ENCODE measurements at regions of chr11 and their contacts with region 1.

Region 1: DNA sequence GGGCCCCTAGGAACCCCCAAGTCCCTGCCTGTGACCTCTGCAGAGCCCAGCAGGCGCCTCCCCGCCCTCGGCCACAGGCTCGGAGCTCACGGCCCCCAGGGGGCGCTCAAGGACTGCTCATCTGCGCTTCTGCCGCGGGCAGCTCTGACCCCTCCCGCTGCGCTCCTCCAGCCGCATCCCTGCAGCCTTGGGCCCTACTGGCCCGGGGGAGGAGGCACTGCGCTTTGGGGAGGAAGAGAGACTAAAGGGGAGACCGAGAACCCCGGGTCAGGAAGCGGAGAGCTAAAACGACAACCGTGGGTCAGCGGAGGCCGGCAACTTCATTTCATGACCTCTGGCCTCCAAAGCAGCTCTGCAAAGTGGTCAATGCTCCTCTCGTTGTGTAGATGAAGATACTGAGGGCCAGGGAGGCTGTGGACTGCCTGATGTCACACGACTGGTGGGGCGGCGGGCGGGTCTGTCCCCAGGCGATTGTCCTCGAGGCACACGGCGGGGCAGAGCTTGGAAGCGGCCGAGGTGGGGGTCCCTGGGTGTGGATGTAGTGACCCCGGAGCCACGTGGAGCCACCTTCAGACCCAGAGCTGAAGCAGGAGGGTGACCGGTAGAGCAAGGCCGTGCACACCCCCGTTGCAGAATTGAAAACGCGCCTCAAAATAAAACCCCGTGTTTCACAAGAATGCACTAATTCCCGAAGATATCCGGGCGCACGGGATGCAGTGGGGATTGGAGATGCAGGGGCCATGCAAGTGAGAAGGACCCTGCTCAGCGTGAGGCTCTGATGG is 2.7 kb upstream of the KRTAP5-6 start:
- DNase-seq: peak; percentile 55 to 93 (median 78)
- ATAC-seq: peak; percentile 75
- H3K4me3 ChIP-seq: no peak overlapping the region
- H3K4me3 Mint-ChIP-seq: no peak overlapping the region
- H3K27ac ChIP-seq: no peak overlapping the region
- H3K27ac Mint-ChIP-seq: no peak overlapping the region
- H3K4me1 ChIP-seq: peaks cover 15% of the 10 kb centered on the region
- H3K4me1 Mint-ChIP-seq: peaks cover 3% of the 10 kb centered on the region
- H3K27me3 ChIP-seq: peaks cover 10 to 28% of the 10 kb centered on the region in 2 experiments
- H3K27me3 Mint-ChIP-seq: peaks cover 8% of the 10 kb centered on the region
- CTCF ChIP-seq: peak; percentile 77

Region 2: GRCh38 chr11:1652771-1653540 is 41.3 kb before region 1 on chr11:
- CTCF ChIA-PET with region 1: interaction called, 19 read pairs
- POLR2A ChIA-PET with region 1: no interaction called
- intact Hi-C with region 1: loop called (anchors 1 to 5 kb)
- DNase-seq: peak; percentile 60 to 86 (median 74)
- ATAC-seq: peak; percentile 98
- H3K4me3 ChIP-seq: no peak overlapping the region
- H3K4me3 Mint-ChIP-seq: no peak overlapping the region
- H3K27ac ChIP-seq: no peak overlapping the region
- H3K27ac Mint-ChIP-seq: no peak overlapping the region
- H3K4me1 ChIP-seq: peaks cover 6% of the 10 kb centered on the region
- H3K4me1 Mint-ChIP-seq: no peaks in the 10 kb centered on the region
- H3K27me3 ChIP-seq: no peaks in the 10 kb centered on the region
- H3K27me3 Mint-ChIP-seq: peaks cover 12% of the 10 kb centered on the region
- CTCF ChIP-seq: peak; percentile 98

Region 3: GRCh38 chr11:1772270-1773130 is 78.2 kb after region 1 on chr11:
- CTCF ChIA-PET with region 1: no interaction called
- POLR2A ChIA-PET with region 1: no interaction called
- intact Hi-C with region 1: loop called in 1 of 2 experiments (anchors 2 kb)
- DNase-seq: peak in 8 of 14 experiments; percentile 23 to 74 (median 47)
- ATAC-seq: peak; percentile 89
- H3K4me3 ChIP-seq: peak overlapping the region; percentile 19
- H3K4me3 Mint-ChIP-seq: no peak overlapping the region
- H3K27ac ChIP-seq: no peak overlapping the region
- H3K27ac Mint-ChIP-seq: no peak overlapping the region
- H3K4me1 ChIP-seq: peaks cover 27% of the 10 kb centered on the region
- H3K4me1 Mint-ChIP-seq: peaks cover 11% of the 10 kb centered on the region
- H3K27me3 ChIP-seq: peaks cover 0 to 2% of the 10 kb centered on the region in 2 experiments
- H3K27me3 Mint-ChIP-seq: no peaks in the 10 kb centered on the region
- CTCF ChIP-seq: no peak

Region 4: GRCh38 chr11:1832211-1832919 is 138.1 kb after region 1 on chr11:
- CTCF ChIA-PET with region 1: interaction called, 116 read pairs
- POLR2A ChIA-PET with region 1: interaction called, 14 read pairs
- intact Hi-C with region 1: loop called (anchors 1 kb)
- DNase-seq: peak; percentile 45 to 84 (median 64)
- ATAC-seq: peak; percentile 75
- H3K4me3 ChIP-seq: no peak overlapping the region
- H3K4me3 Mint-ChIP-seq: no peak overlapping the region
- H3K27ac ChIP-seq: no peak overlapping the region
- H3K27ac Mint-ChIP-seq: no peak overlapping the region
- H3K4me1 ChIP-seq: peaks cover 10% of the 10 kb centered on the region
- H3K4me1 Mint-ChIP-seq: no peaks in the 10 kb centered on the region
- H3K27me3 ChIP-seq: peaks cover 8 to 16% of the 10 kb centered on the region in 2 experiments
- H3K27me3 Mint-ChIP-seq: peaks cover 5% of the 10 kb centered on the region
- CTCF ChIP-seq: peak; percentile 97

Region 5: GRCh38 chr11:2002807-2003206 is 308.6 kb after region 1 on chr11:
- CTCF ChIA-PET with region 1: interaction called, 20 read pairs
- POLR2A ChIA-PET with region 1: interaction called, 7 read pairs
- intact Hi-C with region 1: no loop called
- DNase-seq: no peak
- ATAC-seq: peak; percentile 60
- H3K4me3 ChIP-seq: no peak overlapping the region
- H3K4me3 Mint-ChIP-seq: no peak overlapping the region
- H3K27ac ChIP-seq: no peak overlapping the region
- H3K27ac Mint-ChIP-seq: no peak overlapping the region
- H3K4me1 ChIP-seq: no peaks in the 10 kb centered on the region
- H3K4me1 Mint-ChIP-seq: no peaks in the 10 kb centered on the region
- H3K27me3 ChIP-seq: no peaks in the 10 kb centered on the region
- H3K27me3 Mint-ChIP-seq: no peaks in the 10 kb centered on the region
- CTCF ChIP-seq: no peak

Region 6: DNA sequence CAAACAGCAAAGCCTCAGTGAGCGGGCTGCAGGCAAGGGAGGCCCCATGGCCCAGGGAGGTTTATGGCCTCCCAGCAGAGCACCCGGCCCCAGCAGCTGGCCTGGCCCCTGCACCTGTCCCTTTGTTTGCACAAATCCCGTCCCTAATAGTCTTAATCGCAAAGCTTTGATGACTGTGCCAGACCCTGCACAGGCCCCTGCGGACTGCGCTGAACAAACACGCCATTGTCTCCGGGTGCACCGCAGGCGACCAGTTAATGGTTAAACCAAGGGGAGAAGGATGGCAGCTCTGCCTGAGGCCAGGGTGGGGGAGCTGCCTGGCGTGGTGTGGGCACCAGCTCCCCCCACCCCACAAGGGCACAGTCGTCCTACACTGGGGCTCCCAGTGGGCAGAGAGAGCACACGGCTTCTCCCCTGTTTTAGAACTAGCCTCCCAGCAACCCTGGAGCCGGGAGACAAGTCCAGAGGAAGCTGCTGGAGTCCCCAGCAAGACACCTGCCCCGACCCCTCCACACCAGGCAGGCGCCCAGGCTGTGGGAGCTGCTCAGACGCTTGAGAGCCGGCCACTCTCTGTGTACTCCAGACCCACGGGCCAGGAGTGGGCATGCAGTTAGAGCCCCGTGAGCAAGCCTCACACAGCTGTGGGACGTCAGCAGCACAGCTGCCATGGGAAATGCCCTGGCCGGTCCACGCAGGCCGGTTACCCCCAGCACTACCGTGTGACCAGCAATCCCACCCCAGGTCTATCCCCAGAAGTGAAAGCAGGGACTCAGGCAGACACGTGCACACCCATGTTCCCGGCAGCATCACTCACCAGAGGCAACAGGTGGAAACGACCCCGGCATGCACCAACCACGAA is 517.1 kb after region 1 on chr11:
- CTCF ChIA-PET with region 1: no interaction called
- POLR2A ChIA-PET with region 1: no interaction called
- intact Hi-C with region 1: no loop called
- DNase-seq: peak in 3 of 14 experiments; percentile 1 to 29 (median 7)
- ATAC-seq: no peak
- H3K4me3 ChIP-seq: no peak overlapping the region
- H3K4me3 Mint-ChIP-seq: no peak overlapping the region
- H3K27ac ChIP-seq: no peak overlapping the region
- H3K27ac Mint-ChIP-seq: no peak overlapping the region
- H3K4me1 ChIP-seq: peaks cover 21% of the 10 kb centered on the region
- H3K4me1 Mint-ChIP-seq: peaks cover 12% of the 10 kb centered on the region
- H3K27me3 ChIP-seq: no peaks in the 10 kb centered on the region
- H3K27me3 Mint-ChIP-seq: no peaks in the 10 kb centered on the region
- CTCF ChIP-seq: no peak

Region 7: DNA sequence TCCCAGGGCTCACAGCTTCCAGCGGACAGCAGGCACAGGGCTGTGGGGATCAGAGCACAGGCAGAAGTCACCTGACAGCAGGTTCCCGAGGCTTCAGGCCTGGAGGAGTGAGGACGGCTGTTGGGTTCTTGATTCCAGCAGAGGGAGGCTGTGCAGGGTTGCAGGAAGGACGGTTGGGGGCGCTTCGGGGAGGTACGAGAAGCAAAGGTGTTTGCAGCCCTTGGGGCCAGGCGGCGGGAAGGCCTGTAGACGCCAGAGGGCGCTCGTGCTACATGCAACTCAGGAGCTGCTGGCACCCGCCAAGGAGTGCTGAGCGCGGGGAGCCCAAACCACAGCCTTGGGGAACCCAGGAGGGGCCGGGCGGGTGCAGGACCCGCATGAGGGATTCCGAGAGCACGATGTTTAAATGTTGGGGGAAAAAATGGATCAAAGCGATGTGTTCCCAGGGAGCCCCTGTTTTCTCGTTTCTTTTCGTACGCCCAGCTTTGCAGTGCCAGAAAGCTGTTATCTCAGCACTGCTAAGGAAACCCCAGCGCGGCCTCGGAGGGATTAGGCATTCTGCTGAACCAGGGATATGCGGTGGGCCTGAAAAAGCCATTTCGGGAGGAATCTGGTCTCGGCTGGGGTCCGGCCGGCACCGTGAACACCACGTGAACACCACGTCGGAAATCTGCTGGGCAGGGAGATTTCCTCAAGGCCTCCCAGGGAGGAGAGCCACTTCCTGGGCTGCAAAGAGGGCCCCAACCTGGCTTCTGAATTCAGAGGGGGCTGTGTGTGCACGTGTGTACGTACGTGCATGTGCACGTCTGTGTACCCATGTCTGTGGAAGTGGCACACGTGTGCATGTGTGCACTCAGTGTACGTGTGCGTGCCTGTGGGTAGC is 838.7 kb after region 1 on chr11:
- CTCF ChIA-PET with region 1: no interaction called
- POLR2A ChIA-PET with region 1: no interaction called
- intact Hi-C with region 1: no loop called
- DNase-seq: peak; percentile 86 to 97 (median 92)
- ATAC-seq: peak; percentile 89
- H3K4me3 ChIP-seq: peak overlapping the region; percentile 33
- H3K4me3 Mint-ChIP-seq: peak overlapping the region; percentile 77
- H3K27ac ChIP-seq: no peak overlapping the region
- H3K27ac Mint-ChIP-seq: no peak overlapping the region
- H3K4me1 ChIP-seq: peaks cover 31% of the 10 kb centered on the region
- H3K4me1 Mint-ChIP-seq: peaks cover 25% of the 10 kb centered on the region
- H3K27me3 ChIP-seq: no peaks in the 10 kb centered on the region
- H3K27me3 Mint-ChIP-seq: no peaks in the 10 kb centered on the region
- CTCF ChIP-seq: peak; percentile 99

Measured in CD4-positive, alpha-beta T cell (primary cell).